ENCODE measurements at regions of chr13 and their contacts with region 1.

Region 1: DNA sequence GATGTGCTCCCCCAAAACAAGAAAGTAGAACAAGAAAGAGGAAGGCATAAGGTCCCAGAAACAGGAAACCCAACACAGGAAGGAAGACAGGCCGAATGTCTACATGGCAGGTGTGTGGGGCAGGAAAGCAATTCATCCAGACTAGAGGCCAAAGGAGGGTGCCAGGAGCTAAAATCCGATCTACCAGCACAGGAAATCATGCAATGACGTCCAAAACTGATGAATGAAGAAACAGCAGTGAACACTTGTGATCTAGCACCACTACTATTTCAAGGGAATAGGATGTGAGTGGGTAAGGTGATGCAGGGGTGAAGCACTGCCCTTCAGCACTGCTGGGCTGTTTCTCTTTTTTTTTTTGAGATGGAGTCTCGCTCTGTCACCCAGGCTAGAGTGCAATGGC is 59.1 kb downstream of the DOCK9 start:
- DNase-seq: no peak
- ATAC-seq: peak; percentile 47
- H3K4me3 Mint-ChIP-seq: no peak overlapping the region
- H3K27ac Mint-ChIP-seq: peak overlapping the region; percentile 70
- H3K4me1 Mint-ChIP-seq: peaks cover 33% of the 10 kb centered on the region
- H3K27me3 Mint-ChIP-seq: no peaks in the 10 kb centered on the region
- CTCF ChIP-seq: no peak

Region 2: DNA sequence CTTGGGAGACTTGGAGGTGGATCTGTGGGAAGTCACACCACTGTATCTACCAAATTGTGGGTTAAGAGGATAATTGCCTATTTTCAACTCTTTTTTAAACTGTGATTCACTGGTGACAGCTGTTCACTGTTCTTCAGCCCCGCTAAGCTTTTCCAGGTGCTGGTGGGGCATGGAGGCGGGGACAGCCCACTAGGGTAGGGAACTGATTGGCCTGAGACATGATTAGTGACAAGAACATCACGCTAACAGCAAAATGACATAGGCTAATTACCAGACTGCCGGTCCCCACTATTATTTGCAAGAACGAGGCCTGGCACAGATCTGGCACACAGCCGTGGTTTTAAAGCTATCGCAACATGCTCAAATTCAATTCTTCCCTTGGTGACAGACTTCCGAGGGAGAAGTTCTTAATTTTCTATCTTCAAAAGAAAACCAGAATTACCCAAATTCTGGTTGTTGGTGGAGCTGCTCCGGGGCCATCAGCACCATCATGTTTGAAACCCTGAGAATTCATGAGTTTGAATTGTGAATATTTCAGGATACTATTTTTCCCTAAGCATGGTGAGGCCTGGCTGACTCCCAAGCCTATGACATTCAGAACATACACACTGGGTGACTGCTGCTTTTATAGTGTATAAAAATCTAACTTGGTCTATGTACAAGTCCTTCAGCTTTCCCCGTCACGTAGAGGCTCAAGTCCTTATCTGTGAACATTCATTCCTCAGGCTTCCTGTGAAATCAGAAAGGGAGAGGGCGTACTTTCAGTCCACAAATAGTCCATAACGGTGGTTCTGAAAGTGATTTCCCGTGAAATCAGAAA is 41.2 kb after region 1 on chr13:
- CTCF ChIA-PET with region 1: no interaction called
- POLR2A ChIA-PET with region 1: no interaction called
- intact Hi-C with region 1: loop called (anchors 5 kb)
- DNase-seq: no peak
- ATAC-seq: no peak
- H3K4me3 Mint-ChIP-seq: no peak overlapping the region
- H3K27ac Mint-ChIP-seq: no peak overlapping the region
- H3K4me1 Mint-ChIP-seq: peaks cover 16% of the 10 kb centered on the region
- H3K27me3 Mint-ChIP-seq: no peaks in the 10 kb centered on the region
- CTCF ChIP-seq: no peak

Measured in activated CD8-positive, alpha-beta T cell treated with anti-CD3 and anti-CD28 coated beads for 36 hours (primary cell).